ENCODE measurements at regions of chr9 and their contacts with region 1.

Region 1: GRCh38 chr9:96317335-96317980 is 15.5 kb upstream of the HSD17B3 start:
- DNase-seq: no peak
- ATAC-seq: peak; percentile 87

Region 2: GRCh38 chr9:96241391-96241809 is 76.1 kb before region 1 on chr9:
- intact Hi-C with region 1: loop called (anchors 10 kb)
- DNase-seq: no peak
- ATAC-seq: no peak

Region 3: DNA sequence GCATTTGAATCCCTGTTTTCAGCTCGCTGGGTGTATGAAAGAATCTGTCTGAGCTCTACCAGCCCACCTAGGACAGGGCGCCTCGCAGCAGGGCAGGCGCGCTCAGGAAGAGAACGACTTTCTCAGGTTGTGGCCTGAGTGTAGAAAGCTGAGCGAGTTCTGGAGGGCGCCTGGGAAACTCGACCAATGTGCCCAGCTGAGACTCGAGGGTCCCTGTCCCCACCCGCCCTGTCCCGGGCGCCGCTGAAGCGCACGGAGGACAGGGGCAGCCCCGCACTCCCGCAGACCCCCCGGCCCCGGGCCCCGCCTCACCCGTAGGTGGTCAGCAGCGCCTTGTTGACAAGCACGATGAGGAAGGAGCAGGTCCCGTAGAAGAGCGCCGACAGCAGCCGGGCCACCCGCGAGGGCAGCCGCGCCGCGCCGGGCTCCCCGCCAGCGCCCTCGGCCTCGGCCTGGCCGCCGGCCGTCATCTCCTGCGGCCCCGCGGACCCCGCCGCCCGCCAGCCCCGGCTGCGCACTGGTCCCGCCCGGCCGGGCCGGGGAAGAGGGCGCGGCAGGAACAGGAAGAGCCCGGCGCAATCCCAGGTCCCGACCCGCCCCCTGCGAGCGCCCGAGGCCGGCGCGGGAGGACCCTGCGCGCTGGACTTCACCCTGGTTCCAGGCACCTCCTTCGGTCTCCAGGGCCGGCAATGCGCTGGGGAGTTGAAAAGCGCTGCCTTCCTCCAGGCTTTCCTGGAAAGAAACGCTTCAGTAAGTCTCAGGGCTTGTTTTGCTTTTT is 65.9 kb after region 1 on chr9 and contains the start of gene SLC35D2:
- intact Hi-C with region 1: no loop called
- DNase-seq: peak; percentile 74
- ATAC-seq: peak; percentile 94
- total RNA-seq, gene SLC35D2: 30.3 TPM